Head of caudate nucleus (tissue), 42 donors: ENCODE measurements at regions of chr1 and their contacts with region 1.

Region 1: GRCh38 chr1:221435504-221435904 is 306.4 kb downstream of the DUSP10 start:
- DNase-seq: peak in 4 of 42 donors; percentile 5 to 56 (median 19)

Region 2: GRCh38 chr1:220879076-220879508 is 556.4 kb before region 1 on chr1 and contains the start of gene HLX:
- intact Hi-C with region 1: loop called (anchors 5 kb)
- DNase-seq: peak in 41 of 42 donors; percentile 37 to 82 (median 64)

Region 3: GRCh38 chr1:221263831-221264767 is 171.4 kb before region 1 on chr1:
- intact Hi-C with region 1: loop called (anchors 5 kb)
- DNase-seq: peak; percentile 3 to 91 (median 71)

Region 4: GRCh38 chr1:221335161-221336101 is 100.1 kb before region 1 on chr1:
- intact Hi-C with region 1: loop called (anchors 10 kb)
- DNase-seq: peak in 27 of 42 donors; percentile 2 to 80 (median 41)

Region 5: GRCh38 chr1:221363039-221363438 is 72.5 kb before region 1 on chr1:
- intact Hi-C with region 1: no loop called
- DNase-seq: no peak